GM12878 (cell line): ENCODE measurements at regions of chr10 and their contacts with region 1.

Region 1: GRCh38 chr10:63720072-63720537 is 198.9 kb downstream of the REEP3 start:
- DNase-seq: peak; percentile 25
- ATAC-seq: peak; percentile 81
- H3K4me3 ChIP-seq: no peak overlapping the region
- H3K27ac ChIP-seq: no peak overlapping the region
- H3K4me1 ChIP-seq: no peaks in the 10 kb centered on the region
- H3K27me3 ChIP-seq: no peaks in the 10 kb centered on the region; a peak in 2 of 4 replicates
- CTCF ChIP-seq: peak; percentile 81 to 95 (median 92); a peak in 5 of 6 replicates
- EP300 ChIP-seq: no peak
- POLR2A ChIP-seq: no peak
- RAD21 ChIP-seq: peak; percentile 94

Region 2: DNA sequence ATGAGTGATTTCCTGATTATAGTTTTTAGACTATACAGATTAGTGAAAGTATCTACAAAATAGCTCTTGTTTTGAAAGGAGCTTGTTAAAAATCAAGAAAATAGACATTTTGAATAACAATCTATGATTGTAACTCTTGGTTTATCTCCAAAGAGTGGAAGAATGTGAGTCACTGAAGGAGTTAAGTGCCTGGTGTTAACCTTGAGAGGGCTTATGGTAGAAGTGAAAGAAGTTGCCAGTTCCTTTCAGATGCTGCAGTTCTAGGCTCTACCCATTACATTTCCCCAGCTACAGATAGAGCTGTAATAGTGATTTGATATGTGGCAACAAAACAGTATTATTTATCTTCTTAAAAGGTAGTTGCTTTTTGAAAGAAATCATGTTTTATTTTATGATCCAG is 574.3 kb before region 1 on chr10:
- CTCF ChIA-PET with region 1: interaction called, 12 read pairs
- POLR2A ChIA-PET with region 1: no interaction called
- RAD21 ChIA-PET with region 1: interaction called, 6 read pairs
- SMC1A ChIA-PET with region 1: interaction called, 9 read pairs
- in situ Hi-C with region 1: no loop called
- intact Hi-C with region 1: no loop called
- DNase-seq: no peak
- ATAC-seq: peak; percentile 80
- H3K4me3 ChIP-seq: no peak overlapping the region
- H3K27ac ChIP-seq: no peak overlapping the region
- H3K4me1 ChIP-seq: no peaks in the 10 kb centered on the region; the same call in 1 of the 2 replicates
- H3K27me3 ChIP-seq: no peaks in the 10 kb centered on the region
- CTCF ChIP-seq: no peak
- EP300 ChIP-seq: no peak
- POLR2A ChIP-seq: no peak
- RAD21 ChIP-seq: no peak

Region 3: DNA sequence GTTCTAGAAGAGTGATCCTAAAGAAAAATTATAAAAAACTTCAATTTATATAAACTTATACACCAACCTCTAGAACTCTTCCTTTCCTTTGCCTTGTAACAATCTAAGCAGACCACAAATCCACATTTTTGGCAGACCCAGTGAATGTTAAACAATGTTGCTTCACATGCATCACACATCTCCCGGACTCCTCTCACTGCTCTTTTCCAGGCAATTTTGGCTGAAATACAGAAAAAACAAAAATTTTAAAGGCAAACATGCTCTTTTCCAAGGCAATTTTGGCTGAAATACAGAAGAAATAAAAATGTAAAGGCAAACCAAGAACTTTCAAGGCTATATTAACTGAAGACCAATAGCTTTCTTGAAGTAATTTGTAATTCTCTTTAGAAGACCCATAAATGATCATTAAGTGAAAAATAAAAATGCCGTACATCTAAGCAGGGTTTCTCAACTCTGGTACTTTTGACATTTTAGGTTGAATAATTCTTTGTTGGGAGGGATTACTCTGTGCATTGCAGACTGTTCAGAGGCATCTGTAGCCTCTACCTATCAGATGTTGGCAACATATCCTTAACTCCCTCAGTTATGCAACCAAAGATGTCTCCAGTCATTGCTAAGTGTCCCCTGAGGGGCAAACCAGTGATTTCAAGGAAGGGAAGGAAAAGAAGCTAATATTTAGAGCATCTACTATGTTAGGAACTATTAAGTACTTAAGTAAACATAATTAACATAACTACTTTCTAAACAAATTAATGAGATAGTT is 522.6 kb before region 1 on chr10:
- CTCF ChIA-PET with region 1: interaction called, 10 read pairs
- POLR2A ChIA-PET with region 1: no interaction called
- RAD21 ChIA-PET with region 1: interaction called, 6 read pairs
- SMC1A ChIA-PET with region 1: interaction called, 8 read pairs
- in situ Hi-C with region 1: no loop called
- intact Hi-C with region 1: no loop called
- DNase-seq: no peak
- ATAC-seq: no peak
- H3K4me3 ChIP-seq: no peak overlapping the region
- H3K27ac ChIP-seq: no peak overlapping the region
- H3K4me1 ChIP-seq: no peaks in the 10 kb centered on the region
- H3K27me3 ChIP-seq: no peaks in the 10 kb centered on the region
- CTCF ChIP-seq: no peak
- EP300 ChIP-seq: no peak
- POLR2A ChIP-seq: no peak
- RAD21 ChIP-seq: no peak

Region 4: GRCh38 chr10:63268798-63269503 is 451.2 kb before region 1 on chr10:
- CTCF ChIA-PET with region 1: interaction called, 10 read pairs
- POLR2A ChIA-PET with region 1: no interaction called
- RAD21 ChIA-PET with region 1: interaction called, 4 read pairs
- SMC1A ChIA-PET with region 1: no interaction called
- in situ Hi-C with region 1: no loop called
- intact Hi-C with region 1: no loop called
- DNase-seq: peak; percentile 95
- ATAC-seq: peak; percentile 87
- H3K4me3 ChIP-seq: peak overlapping the region; percentile 91
- H3K27ac ChIP-seq: peak overlapping the region; percentile 80
- H3K4me1 ChIP-seq: peaks cover 18% of the 10 kb centered on the region
- H3K27me3 ChIP-seq: no peaks in the 10 kb centered on the region
- CTCF ChIP-seq: peak in 1 of 3 experiments; percentile 30; a peak in 1 of 6 replicates
- EP300 ChIP-seq: peak; percentile 83 to 84; a peak in 3 of 4 replicates
- POLR2A ChIP-seq: peak; percentile 99
- RAD21 ChIP-seq: no peak

Region 5: GRCh38 chr10:63614371-63614891 is 105.7 kb before region 1 on chr10:
- CTCF ChIA-PET with region 1: interaction called, 8 read pairs
- POLR2A ChIA-PET with region 1: no interaction called
- RAD21 ChIA-PET with region 1: interaction called, 3 read pairs
- SMC1A ChIA-PET with region 1: interaction called, 14 read pairs
- in situ Hi-C with region 1: no loop called
- intact Hi-C with region 1: no loop called
- DNase-seq: no peak
- ATAC-seq: no peak; the same call in 2 of the 3 replicates
- H3K4me3 ChIP-seq: no peak overlapping the region
- H3K27ac ChIP-seq: no peak overlapping the region
- H3K4me1 ChIP-seq: no peaks in the 10 kb centered on the region
- H3K27me3 ChIP-seq: no peaks in the 10 kb centered on the region
- CTCF ChIP-seq: no peak
- EP300 ChIP-seq: no peak
- POLR2A ChIP-seq: no peak
- RAD21 ChIP-seq: no peak

Region 6: DNA sequence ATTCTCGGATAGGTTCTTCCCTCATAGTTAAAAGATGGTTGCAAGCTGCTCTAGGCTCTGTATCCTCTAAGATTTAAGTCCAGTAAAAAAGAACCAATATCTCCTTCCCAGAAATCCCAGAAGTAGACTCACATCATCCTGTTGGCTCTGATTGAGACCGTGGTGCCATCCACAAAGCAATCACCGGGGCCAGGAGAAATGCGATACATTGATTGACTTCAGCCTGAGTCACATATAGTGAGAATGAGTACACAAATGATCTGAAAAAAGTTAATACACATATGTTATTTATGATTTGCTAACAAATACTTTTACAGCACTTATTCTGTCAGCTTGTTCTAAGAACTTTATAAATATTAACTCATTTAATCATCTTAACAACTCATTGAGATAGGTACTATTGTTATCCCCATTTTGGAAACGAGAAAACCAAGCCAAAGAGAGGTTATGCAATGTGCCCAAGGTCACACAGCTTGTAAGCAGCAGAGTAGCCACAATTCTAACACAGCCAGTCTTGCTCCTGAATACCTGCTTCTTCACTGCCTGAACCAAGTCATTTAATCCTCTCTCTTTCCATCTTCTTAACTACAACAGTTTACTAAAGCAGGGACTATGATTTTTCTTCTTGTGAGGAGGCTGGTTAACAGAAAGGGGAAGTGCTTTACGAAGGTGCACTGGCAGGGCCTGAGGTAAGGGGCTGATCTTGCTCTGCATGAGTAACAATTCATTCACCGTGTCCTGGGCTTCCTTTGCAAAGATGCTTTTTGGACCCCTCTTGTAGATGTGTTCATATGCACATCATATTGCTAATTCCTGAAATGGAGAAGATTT is 21.9 kb before region 1 on chr10:
- CTCF ChIA-PET with region 1: interaction called, 62 read pairs
- POLR2A ChIA-PET with region 1: no interaction called
- RAD21 ChIA-PET with region 1: interaction called, 12 read pairs
- SMC1A ChIA-PET with region 1: interaction called, 10 read pairs
- in situ Hi-C with region 1: no loop called
- intact Hi-C with region 1: no loop called
- DNase-seq: no peak
- ATAC-seq: peak; percentile 87
- H3K4me3 ChIP-seq: no peak overlapping the region
- H3K27ac ChIP-seq: no peak overlapping the region
- H3K4me1 ChIP-seq: peaks cover 4% of the 10 kb centered on the region
- H3K27me3 ChIP-seq: no peaks in the 10 kb centered on the region
- CTCF ChIP-seq: no peak
- EP300 ChIP-seq: no peak
- POLR2A ChIP-seq: no peak
- RAD21 ChIP-seq: no peak

Region 7: GRCh38 chr10:63780101-63780500 is 60.0 kb after region 1 on chr10:
- CTCF ChIA-PET with region 1: no interaction called
- POLR2A ChIA-PET with region 1: no interaction called
- RAD21 ChIA-PET with region 1: no interaction called
- SMC1A ChIA-PET with region 1: no interaction called
- in situ Hi-C with region 1: no loop called
- intact Hi-C with region 1: no loop called
- DNase-seq: no peak
- ATAC-seq: no peak
- H3K4me3 ChIP-seq: no peak overlapping the region
- H3K27ac ChIP-seq: no peak overlapping the region
- H3K4me1 ChIP-seq: no peaks in the 10 kb centered on the region
- H3K27me3 ChIP-seq: no peaks in the 10 kb centered on the region
- CTCF ChIP-seq: no peak
- EP300 ChIP-seq: no peak
- POLR2A ChIP-seq: no peak
- RAD21 ChIP-seq: no peak

Region 8: DNA sequence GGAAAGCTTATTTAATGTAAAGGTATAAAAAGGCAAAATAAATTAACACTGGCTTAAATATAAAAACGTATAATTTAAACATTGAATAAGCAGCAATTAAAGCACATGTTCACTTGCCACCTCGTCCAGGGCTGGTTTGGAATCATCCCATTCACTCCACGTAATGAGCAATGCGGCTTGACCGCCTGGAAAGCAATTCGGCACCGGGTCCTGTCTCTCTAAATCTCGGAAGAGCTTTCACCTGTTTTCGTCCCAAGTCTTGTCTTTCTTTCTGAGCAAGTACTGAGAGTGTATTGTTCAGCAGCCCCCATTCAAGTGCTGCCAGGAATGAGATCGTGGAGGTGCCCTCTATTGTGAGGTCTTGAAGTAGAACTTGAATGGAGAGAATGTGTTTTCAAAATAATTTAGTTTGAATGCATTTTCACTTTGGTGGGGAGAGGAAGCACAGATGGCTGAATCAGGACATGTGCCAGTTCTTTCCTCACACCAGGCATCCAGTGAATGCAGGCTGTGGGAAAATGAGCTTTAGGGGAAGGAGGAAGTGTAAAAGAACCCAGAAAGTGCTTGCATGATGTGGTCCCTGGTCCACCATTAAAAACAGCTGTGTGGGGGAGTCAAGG is 316.3 kb after region 1 on chr10:
- CTCF ChIA-PET with region 1: no interaction called
- POLR2A ChIA-PET with region 1: no interaction called
- RAD21 ChIA-PET with region 1: no interaction called
- SMC1A ChIA-PET with region 1: no interaction called
- in situ Hi-C with region 1: no loop called
- intact Hi-C with region 1: no loop called
- DNase-seq: no peak
- ATAC-seq: no peak
- H3K4me3 ChIP-seq: no peak overlapping the region
- H3K27ac ChIP-seq: no peak overlapping the region
- H3K4me1 ChIP-seq: peaks cover 5% of the 10 kb centered on the region
- H3K27me3 ChIP-seq: no peaks in the 10 kb centered on the region; a peak in 1 of 4 replicates
- CTCF ChIP-seq: no peak
- EP300 ChIP-seq: no peak
- POLR2A ChIP-seq: no peak
- RAD21 ChIP-seq: no peak